GM18951 (cell line): ENCODE measurements at regions of chr5 and their contacts with region 1.

Region 1: GRCh38 chr5:136182618-136183017 is 10.3 kb downstream of the SMIM32 start:
- POLR2A ChIP-seq: no peak

Region 2: GRCh38 chr5:135950611-135951010 is 232.0 kb before region 1 on chr5:
- in situ Hi-C with region 1: loop called (anchors 10 kb)
- POLR2A ChIP-seq: no peak